Activated naive CD4-positive, alpha-beta T cell treated with anti-CD3 and anti-CD28 coated beads for 36 hours (primary cell): ENCODE measurements at regions of chr15 and their contacts with region 1.

Region 1: DNA sequence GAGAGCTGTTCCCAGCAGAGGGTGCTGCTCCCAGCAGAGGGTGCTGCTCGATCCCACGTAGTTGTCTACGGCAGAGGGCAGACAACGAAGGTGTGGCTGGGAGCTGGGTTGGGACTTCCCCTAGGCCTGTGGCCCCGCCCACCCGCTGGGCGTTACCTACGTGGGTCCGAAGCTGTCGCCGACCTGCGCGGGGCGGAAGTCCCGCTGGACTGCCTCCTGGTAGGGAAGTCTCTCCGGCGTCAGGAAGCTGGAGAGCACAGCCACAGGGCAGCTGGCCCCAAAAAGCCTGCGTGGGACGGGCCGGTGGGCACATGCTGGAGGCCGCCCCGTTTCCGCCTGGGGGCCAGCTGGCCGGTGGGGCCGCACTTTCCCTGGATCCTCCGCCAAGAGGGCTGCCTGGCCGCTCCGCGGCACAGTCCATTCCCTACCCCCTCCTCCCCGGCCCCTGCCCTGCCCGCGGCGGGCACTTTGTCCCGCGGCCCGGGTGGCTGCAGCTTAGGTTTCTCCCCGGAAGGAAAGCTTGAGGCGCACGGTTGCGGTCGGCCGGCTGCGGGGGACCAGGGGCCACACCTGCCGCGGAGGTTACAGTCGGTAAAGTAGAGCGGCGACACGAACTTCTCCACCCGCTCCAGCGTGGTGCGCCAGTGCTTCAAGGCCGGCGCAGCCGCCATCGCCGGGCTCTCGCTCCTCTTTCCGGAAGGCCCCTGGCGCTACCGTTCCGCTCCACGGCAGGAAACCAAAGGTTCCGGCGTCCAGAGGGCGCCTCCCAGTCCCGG is at the start of gene MAN2C1:
- DNase-seq: peak; percentile 96
- H3K4me3 Mint-ChIP-seq: peak within 1 kb of the TSS; percentile 90
- H3K27ac Mint-ChIP-seq: peak within 1 kb of the TSS; percentile 94
- H3K4me1 Mint-ChIP-seq: peaks cover 27% of the 10 kb centered on the region
- H3K27me3 Mint-ChIP-seq: no peaks in the 10 kb centered on the region
- total RNA-seq, gene MAN2C1: 228 to 247 TPM

Region 2: GRCh38 chr15:75354454-75354853 is 13.6 kb before region 1 on chr15:
- CTCF ChIA-PET with region 1: interaction called, 10 read pairs
- intact Hi-C with region 1: no loop called
- DNase-seq: no peak
- H3K4me3 Mint-ChIP-seq: no peak overlapping the region
- H3K27ac Mint-ChIP-seq: no peak overlapping the region
- H3K4me1 Mint-ChIP-seq: peaks cover 14% of the 10 kb centered on the region
- H3K27me3 Mint-ChIP-seq: no peaks in the 10 kb centered on the region

Region 3: GRCh38 chr15:75508840-75509532 is 140.9 kb after region 1 on chr15:
- CTCF ChIA-PET with region 1: interaction called, 11 read pairs
- intact Hi-C with region 1: loop called (anchors 5 kb)
- DNase-seq: peak; percentile 23
- H3K4me3 Mint-ChIP-seq: no peak overlapping the region
- H3K27ac Mint-ChIP-seq: no peak overlapping the region
- H3K4me1 Mint-ChIP-seq: no peaks in the 10 kb centered on the region
- H3K27me3 Mint-ChIP-seq: no peaks in the 10 kb centered on the region

Region 4: GRCh38 chr15:75625542-75626347 is 257.6 kb after region 1 on chr15 and contains the start of gene SNUPN:
- CTCF ChIA-PET with region 1: interaction called, 6 read pairs
- intact Hi-C with region 1: loop called (anchors 1 kb)
- DNase-seq: peak; percentile 98
- H3K4me3 Mint-ChIP-seq: peak within 1 kb of the TSS; percentile 95
- H3K27ac Mint-ChIP-seq: peak within 1 kb of the TSS; percentile 99
- H3K4me1 Mint-ChIP-seq: peaks cover 41% of the 10 kb centered on the region
- H3K27me3 Mint-ChIP-seq: no peaks in the 10 kb centered on the region
- total RNA-seq, gene SNUPN: 28.5 to 33.1 TPM

Region 5: DNA sequence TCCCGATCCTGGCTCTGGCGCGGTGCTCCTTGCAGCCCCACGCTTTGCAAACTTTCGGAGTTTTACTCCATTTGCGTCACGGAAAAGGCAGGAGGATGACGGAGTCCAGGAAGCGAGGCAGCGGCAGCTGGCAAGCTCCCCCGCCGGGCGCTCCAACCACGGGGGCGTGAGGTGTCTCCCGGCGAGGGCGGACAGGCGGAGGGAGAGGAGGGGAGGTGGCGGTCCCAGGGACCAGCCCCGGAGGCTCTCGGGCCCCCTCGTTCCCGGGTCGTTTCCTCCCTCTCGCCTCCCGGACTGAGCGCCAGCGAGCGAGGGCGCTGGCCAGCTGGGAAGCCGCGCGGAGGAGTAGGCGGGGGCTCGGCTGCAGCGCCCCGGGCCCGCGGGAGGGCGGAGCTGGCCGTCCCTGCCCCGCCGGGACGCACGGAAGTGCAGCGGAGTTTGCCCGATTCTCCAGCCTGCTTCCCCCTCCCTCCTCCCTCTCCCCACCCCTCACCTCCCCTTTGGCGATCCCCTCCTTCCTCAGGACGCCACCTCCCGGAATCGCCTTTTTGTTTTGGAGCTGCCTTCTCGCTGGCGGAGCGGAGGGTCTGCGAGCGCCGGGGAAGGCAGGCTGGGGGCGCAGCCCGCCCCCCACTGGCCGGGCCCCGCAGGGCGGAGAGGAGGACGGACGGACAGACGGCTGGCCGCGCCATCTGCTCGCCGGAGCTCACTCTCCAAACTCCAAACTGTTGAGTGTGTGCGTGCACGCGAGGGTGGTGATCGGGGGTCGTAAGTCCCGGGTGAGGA is 279.5 kb after region 1 on chr15 and contains the start of gene SNX33:
- CTCF ChIA-PET with region 1: interaction called, 38 read pairs
- intact Hi-C with region 1: no loop called
- DNase-seq: peak; percentile 77
- H3K4me3 Mint-ChIP-seq: peak within 1 kb of the TSS; percentile 81
- H3K27ac Mint-ChIP-seq: peak within 1 kb of the TSS; percentile 7
- H3K4me1 Mint-ChIP-seq: peaks cover 18% of the 10 kb centered on the region
- H3K27me3 Mint-ChIP-seq: no peaks in the 10 kb centered on the region
- total RNA-seq, gene SNX33: 1.1 TPM

Region 6: GRCh38 chr15:75801859-75802593 is 433.9 kb after region 1 on chr15:
- CTCF ChIA-PET with region 1: interaction called, 5 read pairs
- intact Hi-C with region 1: loop called (anchors 5 kb)
- DNase-seq: peak; percentile 86
- H3K4me3 Mint-ChIP-seq: peak overlapping the region; percentile 43
- H3K27ac Mint-ChIP-seq: no peak overlapping the region
- H3K4me1 Mint-ChIP-seq: peaks cover 2% of the 10 kb centered on the region
- H3K27me3 Mint-ChIP-seq: peaks cover 19% of the 10 kb centered on the region